ENCODE measurements at regions of chr6 and their contacts with region 1.

Region 1: DNA sequence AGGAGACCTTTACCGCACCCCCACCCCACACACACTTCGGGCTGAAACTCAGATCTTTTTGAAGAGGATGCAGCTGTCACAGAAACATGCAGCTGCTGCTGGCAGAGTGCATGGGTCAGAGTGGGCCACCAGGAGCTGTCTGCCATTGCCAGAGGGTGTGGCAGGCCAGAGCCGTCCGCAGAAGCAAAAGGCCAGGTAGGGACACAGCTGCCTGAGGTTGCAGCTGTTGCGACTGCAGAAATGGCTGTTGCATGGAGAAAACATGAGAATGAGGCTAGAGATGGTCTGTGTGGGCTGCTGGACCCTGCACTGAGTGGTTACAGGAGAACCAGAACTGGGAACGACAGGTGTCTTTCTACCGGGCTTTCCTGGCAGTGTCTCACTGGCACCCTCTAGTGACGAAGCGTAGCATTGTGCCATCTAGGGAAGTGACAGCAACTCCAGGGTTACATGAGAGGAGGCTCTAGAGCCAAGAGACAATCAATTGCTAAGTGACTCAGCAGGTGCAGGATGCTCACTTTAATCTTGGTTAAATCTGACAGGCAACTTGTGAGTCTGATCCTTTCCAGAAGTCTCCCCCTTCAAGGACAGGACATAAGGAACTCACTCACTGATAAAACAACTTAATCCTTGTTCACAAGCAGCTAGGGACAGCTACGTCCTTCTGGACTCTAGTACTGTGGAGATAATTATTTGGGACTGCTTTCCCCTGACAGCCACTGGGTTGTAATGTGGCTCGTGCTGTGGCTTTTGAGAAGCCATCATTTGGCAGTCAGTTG is 29.1 kb upstream of the SERPINB9 start:
- DNase-seq: peak; percentile 77 to 93 (median 86)
- ATAC-seq: peak; percentile 98
- H3K4me3 ChIP-seq: no peak overlapping the region
- H3K4me3 Mint-ChIP-seq: peak overlapping the region; percentile 0
- H3K27ac ChIP-seq: no peak overlapping the region
- H3K27ac Mint-ChIP-seq: no peak overlapping the region
- H3K4me1 ChIP-seq: peaks cover 16% of the 10 kb centered on the region
- H3K4me1 Mint-ChIP-seq: peaks cover 18% of the 10 kb centered on the region
- H3K27me3 ChIP-seq: no peaks in the 10 kb centered on the region
- H3K27me3 Mint-ChIP-seq: no peaks in the 10 kb centered on the region
- CTCF ChIP-seq: peak; percentile 96

Region 2: GRCh38 chr6:2738373-2738979 is 193.7 kb before region 1 on chr6:
- CTCF ChIA-PET with region 1: no interaction called
- POLR2A ChIA-PET with region 1: no interaction called
- intact Hi-C with region 1: loop called in 1 of 2 experiments (anchors 1 kb)
- DNase-seq: peak; percentile 21 to 75 (median 43)
- ATAC-seq: peak; percentile 75
- H3K4me3 ChIP-seq: no peak overlapping the region
- H3K4me3 Mint-ChIP-seq: no peak overlapping the region
- H3K27ac ChIP-seq: no peak overlapping the region
- H3K27ac Mint-ChIP-seq: no peak overlapping the region
- H3K4me1 ChIP-seq: no peaks in the 10 kb centered on the region
- H3K4me1 Mint-ChIP-seq: no peaks in the 10 kb centered on the region
- H3K27me3 ChIP-seq: no peaks in the 10 kb centered on the region
- H3K27me3 Mint-ChIP-seq: peaks cover 4% of the 10 kb centered on the region
- CTCF ChIP-seq: peak; percentile 65

Region 3: GRCh38 chr6:2911171-2911570 is 21.0 kb before region 1 on chr6:
- CTCF ChIA-PET with region 1: interaction called, 5 read pairs
- POLR2A ChIA-PET with region 1: no interaction called
- intact Hi-C with region 1: loop called (anchors 1 to 2 kb)
- DNase-seq: no peak
- ATAC-seq: no peak
- H3K4me3 ChIP-seq: no peak overlapping the region
- H3K4me3 Mint-ChIP-seq: no peak overlapping the region
- H3K27ac ChIP-seq: no peak overlapping the region
- H3K27ac Mint-ChIP-seq: no peak overlapping the region
- H3K4me1 ChIP-seq: peaks cover 15% of the 10 kb centered on the region
- H3K4me1 Mint-ChIP-seq: peaks cover 25% of the 10 kb centered on the region
- H3K27me3 ChIP-seq: no peaks in the 10 kb centered on the region
- H3K27me3 Mint-ChIP-seq: no peaks in the 10 kb centered on the region
- CTCF ChIP-seq: no peak

Region 4: GRCh38 chr6:2917065-2917464 is 15.1 kb before region 1 on chr6:
- CTCF ChIA-PET with region 1: interaction called, 3 read pairs
- POLR2A ChIA-PET with region 1: no interaction called
- intact Hi-C with region 1: loop called in 1 of 2 experiments (anchors 2 kb)
- DNase-seq: no peak
- ATAC-seq: no peak
- H3K4me3 ChIP-seq: no peak overlapping the region
- H3K4me3 Mint-ChIP-seq: no peak overlapping the region
- H3K27ac ChIP-seq: no peak overlapping the region
- H3K27ac Mint-ChIP-seq: no peak overlapping the region
- H3K4me1 ChIP-seq: peaks cover 8% of the 10 kb centered on the region
- H3K4me1 Mint-ChIP-seq: peaks cover 12% of the 10 kb centered on the region
- H3K27me3 ChIP-seq: no peaks in the 10 kb centered on the region
- H3K27me3 Mint-ChIP-seq: no peaks in the 10 kb centered on the region
- CTCF ChIP-seq: no peak

Region 5: DNA sequence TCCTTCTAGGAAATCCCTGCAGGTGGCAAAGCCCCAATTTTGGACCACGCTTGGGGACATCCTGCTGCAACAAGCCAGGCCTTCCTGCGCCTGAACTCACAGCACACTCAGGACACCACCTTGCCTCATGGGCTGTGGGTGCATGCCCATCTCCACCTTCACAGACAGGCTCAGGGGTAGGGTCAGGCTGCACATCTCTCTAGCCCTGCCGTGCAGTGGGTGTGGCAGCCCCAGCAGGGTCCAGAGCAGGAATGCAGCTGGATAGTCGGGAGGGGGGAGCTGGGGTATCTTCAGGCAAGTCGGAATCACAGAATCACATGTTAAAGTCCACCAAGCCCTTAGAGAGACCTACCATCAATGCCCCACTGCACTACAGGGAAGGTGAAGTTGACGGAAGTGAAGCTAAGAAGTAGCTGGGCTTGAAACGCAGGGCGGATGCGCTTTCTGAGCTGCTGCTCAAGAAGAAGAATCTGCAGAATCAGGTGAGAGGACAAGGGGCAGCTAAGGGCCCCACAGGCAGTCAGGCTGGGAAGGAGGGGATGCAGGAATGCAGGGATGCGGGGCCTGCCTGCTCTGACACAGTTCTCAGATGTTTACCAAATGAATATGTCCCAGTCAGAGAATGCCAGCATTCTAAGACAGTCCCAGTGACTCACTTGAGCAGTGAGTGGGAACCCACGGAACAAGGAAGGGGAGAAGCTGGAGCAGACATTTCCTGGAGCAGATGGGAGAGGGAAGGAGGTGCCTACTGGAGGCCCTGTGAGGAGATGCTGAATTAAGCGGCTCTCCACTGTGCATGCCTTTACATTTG is 28.0 kb after region 1 on chr6:
- CTCF ChIA-PET with region 1: no interaction called
- POLR2A ChIA-PET with region 1: no interaction called
- intact Hi-C with region 1: no loop called
- DNase-seq: no peak
- ATAC-seq: no peak
- H3K4me3 ChIP-seq: no peak overlapping the region
- H3K4me3 Mint-ChIP-seq: no peak overlapping the region
- H3K27ac ChIP-seq: no peak overlapping the region
- H3K27ac Mint-ChIP-seq: no peak overlapping the region
- H3K4me1 ChIP-seq: peaks cover 8% of the 10 kb centered on the region
- H3K4me1 Mint-ChIP-seq: peaks cover 9% of the 10 kb centered on the region
- H3K27me3 ChIP-seq: no peaks in the 10 kb centered on the region
- H3K27me3 Mint-ChIP-seq: no peaks in the 10 kb centered on the region
- CTCF ChIP-seq: no peak

Region 6: DNA sequence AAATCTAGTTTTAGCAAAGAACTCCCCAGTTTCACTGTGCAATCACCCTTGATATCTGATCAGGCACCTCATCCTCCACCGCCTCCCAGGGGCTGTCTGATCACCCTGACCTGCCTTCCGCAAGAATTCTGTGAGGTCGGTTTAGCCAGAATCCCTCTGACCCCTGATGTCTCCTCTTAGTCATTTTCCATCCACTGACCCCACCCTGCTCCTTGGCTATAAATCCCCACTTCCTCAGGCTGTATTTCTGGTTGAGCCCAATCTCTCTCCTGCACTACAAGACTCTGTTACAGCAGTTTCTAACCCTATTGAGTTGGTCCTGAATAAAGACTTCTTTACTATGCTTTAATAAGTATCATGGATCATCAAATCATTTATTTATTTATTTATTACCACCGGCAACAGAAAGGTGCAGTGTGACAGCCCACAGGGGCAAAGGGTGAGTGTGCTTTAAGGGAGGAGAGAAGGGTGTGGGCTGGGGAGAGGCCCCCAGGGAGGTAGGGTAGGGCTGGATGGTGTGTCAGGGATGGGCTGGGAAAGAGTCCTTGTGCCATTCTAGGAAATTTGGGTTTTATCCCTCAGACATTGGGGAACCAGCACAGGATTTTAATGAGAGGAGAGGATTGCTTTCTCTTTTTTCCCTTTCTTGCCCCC is 50.4 kb after region 1 on chr6:
- CTCF ChIA-PET with region 1: no interaction called
- POLR2A ChIA-PET with region 1: no interaction called
- intact Hi-C with region 1: no loop called
- DNase-seq: no peak
- ATAC-seq: no peak
- H3K4me3 ChIP-seq: no peak overlapping the region
- H3K4me3 Mint-ChIP-seq: no peak overlapping the region
- H3K27ac ChIP-seq: no peak overlapping the region
- H3K27ac Mint-ChIP-seq: no peak overlapping the region
- H3K4me1 ChIP-seq: peaks cover 6% of the 10 kb centered on the region
- H3K4me1 Mint-ChIP-seq: peaks cover 6% of the 10 kb centered on the region
- H3K27me3 ChIP-seq: no peaks in the 10 kb centered on the region
- H3K27me3 Mint-ChIP-seq: peaks cover 29% of the 10 kb centered on the region
- CTCF ChIP-seq: no peak

Measured in CD4-positive, alpha-beta T cell (primary cell).